Activated T-helper 2 cell treated with anti-CD3 and anti-CD28 coated beads, Interferon-gamma antibody, Interleukin-2, Interleukin-4, amounts not matched to agents 10 μg/mL and 5 μg/mL and 100 μg/mL, durations not matched to agents 14 hours and 24 hours and 36 hours (primary cell): ENCODE measurements at regions of chr5 and their contacts with region 1.

Region 1: DNA sequence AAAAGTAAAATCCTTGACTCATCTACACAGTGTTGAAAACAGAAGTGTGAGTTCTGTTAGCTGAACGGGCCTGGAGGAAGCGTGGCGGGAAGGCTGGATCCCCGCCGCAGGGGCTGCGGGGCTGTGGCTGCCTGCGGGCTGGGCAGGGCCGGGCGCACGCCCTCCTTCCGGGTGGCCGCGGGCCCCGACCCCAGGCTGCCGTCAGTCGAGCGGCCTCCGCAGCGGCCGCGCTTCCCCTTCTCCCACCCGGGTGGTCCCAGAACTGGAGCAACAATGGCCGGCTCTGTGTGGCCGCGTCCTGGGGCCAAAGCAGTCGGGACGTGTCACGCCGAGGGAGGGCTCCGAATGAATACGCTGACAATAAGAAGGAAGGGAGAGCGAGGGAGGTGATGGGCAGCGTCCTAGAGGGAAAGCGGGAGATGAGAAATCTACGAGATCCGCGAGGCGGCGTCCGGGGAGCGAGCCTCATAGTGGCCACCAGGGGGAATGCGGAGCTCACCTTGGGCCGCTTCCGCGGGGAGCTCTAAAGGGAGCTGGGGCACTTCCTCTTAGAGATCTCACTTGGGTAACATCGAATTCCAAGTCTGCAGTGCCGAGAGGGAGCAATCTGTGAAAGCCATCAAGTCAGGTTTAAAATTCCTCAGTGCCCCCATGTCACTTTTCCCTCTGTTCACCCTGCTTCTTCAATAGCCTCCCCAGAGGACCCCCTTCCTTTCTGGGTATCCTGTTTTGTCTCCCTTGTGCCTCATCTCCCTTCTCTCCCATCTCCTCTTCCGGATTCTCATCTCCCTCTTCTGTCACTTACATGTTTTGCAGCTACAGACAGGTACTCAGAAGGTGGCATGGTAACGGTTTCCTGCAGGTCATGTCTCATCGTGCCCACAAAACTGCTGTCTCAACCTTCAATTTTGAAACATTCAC is 83.9 kb downstream of the SLC1A3 start:
- DNase-seq: peak; percentile 41
- H3K4me3 Mint-ChIP-seq: peak overlapping the region; percentile 79
- H3K27ac Mint-ChIP-seq: no peak overlapping the region
- H3K4me1 Mint-ChIP-seq: peaks cover 12% of the 10 kb centered on the region
- H3K27me3 Mint-ChIP-seq: peaks cover 23% of the 10 kb centered on the region

Region 2: GRCh38 chr5:36079200-36079761 is 611.0 kb before region 1 on chr5:
- intact Hi-C with region 1: loop called (anchors 10 kb)
- DNase-seq: no peak
- H3K4me3 Mint-ChIP-seq: no peak overlapping the region
- H3K27ac Mint-ChIP-seq: no peak overlapping the region
- H3K4me1 Mint-ChIP-seq: no peaks in the 10 kb centered on the region
- H3K27me3 Mint-ChIP-seq: peaks cover 8% of the 10 kb centered on the region

Region 3: GRCh38 chr5:36269479-36270219 is 420.7 kb before region 1 on chr5:
- intact Hi-C with region 1: loop called (anchors 5 kb)
- DNase-seq: no peak
- H3K4me3 Mint-ChIP-seq: no peak overlapping the region
- H3K27ac Mint-ChIP-seq: no peak overlapping the region
- H3K4me1 Mint-ChIP-seq: no peaks in the 10 kb centered on the region
- H3K27me3 Mint-ChIP-seq: peaks cover 21% of the 10 kb centered on the region

Region 4: DNA sequence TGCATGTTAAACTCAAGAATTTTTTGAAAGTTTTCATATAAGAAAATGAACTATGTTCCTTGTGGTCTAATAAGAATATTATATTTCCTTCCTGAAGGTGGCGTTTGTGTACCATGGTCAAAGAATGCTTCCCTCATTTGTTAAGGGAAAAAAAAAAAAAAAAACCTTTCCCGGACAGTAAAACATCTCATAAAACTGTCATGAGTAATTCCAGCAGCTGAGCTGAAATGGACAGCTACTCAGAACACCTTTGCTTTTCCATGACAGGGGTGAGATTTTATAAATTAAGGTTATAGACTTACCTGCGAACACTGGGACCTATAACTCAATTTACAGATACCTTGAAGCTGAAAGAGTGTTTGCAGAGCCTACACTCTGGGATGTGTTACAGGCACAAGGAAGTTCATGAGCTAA is 275.4 kb before region 1 on chr5:
- intact Hi-C with region 1: loop called (anchors 5 kb)
- DNase-seq: no peak
- H3K4me3 Mint-ChIP-seq: no peak overlapping the region
- H3K27ac Mint-ChIP-seq: no peak overlapping the region
- H3K4me1 Mint-ChIP-seq: peaks cover 14% of the 10 kb centered on the region
- H3K27me3 Mint-ChIP-seq: peaks cover 4% of the 10 kb centered on the region

Region 5: GRCh38 chr5:36507332-36507952 is 182.9 kb before region 1 on chr5:
- intact Hi-C with region 1: loop called (anchors 10 kb)
- DNase-seq: peak; percentile 52
- H3K4me3 Mint-ChIP-seq: no peak overlapping the region
- H3K27ac Mint-ChIP-seq: no peak overlapping the region
- H3K4me1 Mint-ChIP-seq: no peaks in the 10 kb centered on the region
- H3K27me3 Mint-ChIP-seq: peaks cover 2% of the 10 kb centered on the region

Region 6: GRCh38 chr5:36606428-36607113 is 83.7 kb before region 1 on chr5 and contains the start of gene SLC1A3:
- intact Hi-C with region 1: loop called (anchors 5 kb)
- DNase-seq: peak; percentile 16
- H3K4me3 Mint-ChIP-seq: peak within 1 kb of the TSS; percentile 63
- H3K27ac Mint-ChIP-seq: peak within 1 kb of the TSS; percentile 30
- H3K4me1 Mint-ChIP-seq: peaks cover 16% of the 10 kb centered on the region
- H3K27me3 Mint-ChIP-seq: peaks cover 67% of the 10 kb centered on the region
- total RNA-seq, gene SLC1A3: not detected in 2 replicates